ENCODE measurements at regions of chr17 and their contacts with region 1.

Region 1: GRCh38 chr17:33964344-33964979 is 290.6 kb upstream of the CCL2 start:
- DNase-seq: peak; percentile 81
- H3K4me3 Mint-ChIP-seq: peak overlapping the region; percentile 43
- H3K27ac Mint-ChIP-seq: no peak overlapping the region
- H3K4me1 Mint-ChIP-seq: peaks cover 45% of the 10 kb centered on the region
- H3K27me3 Mint-ChIP-seq: peaks cover 6% of the 10 kb centered on the region

Region 2: DNA sequence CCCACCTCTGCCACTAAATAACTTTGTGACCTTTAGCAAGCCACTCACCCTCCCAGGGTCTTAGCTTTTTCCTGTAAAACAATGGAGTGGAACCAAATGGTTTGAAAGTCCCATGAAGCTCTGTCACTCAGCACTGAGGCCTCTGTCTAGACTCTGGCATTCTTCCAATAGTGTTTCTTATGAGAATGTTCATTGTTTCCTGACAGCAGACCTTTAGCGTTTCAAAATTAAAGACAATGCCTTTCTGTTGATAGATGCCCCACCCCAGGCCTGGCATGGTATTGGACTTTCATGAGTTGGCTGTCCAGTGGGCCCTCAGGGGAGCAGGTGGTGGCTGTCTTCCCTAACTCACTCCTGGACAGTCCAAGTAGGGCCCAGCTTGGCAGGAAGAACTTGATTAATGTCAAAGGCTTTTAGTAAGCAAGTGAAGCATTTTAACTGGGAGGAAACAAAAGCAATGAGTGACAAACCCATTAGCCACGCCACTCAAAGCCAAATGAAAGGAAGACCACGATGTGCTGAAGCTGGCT is 104.1 kb after region 1 on chr17:
- intact Hi-C with region 1: no loop called
- DNase-seq: no peak
- H3K4me3 Mint-ChIP-seq: no peak overlapping the region
- H3K27ac Mint-ChIP-seq: no peak overlapping the region
- H3K4me1 Mint-ChIP-seq: no peaks in the 10 kb centered on the region
- H3K27me3 Mint-ChIP-seq: peaks cover under 1% of the 10 kb centered on the region

Region 3: DNA sequence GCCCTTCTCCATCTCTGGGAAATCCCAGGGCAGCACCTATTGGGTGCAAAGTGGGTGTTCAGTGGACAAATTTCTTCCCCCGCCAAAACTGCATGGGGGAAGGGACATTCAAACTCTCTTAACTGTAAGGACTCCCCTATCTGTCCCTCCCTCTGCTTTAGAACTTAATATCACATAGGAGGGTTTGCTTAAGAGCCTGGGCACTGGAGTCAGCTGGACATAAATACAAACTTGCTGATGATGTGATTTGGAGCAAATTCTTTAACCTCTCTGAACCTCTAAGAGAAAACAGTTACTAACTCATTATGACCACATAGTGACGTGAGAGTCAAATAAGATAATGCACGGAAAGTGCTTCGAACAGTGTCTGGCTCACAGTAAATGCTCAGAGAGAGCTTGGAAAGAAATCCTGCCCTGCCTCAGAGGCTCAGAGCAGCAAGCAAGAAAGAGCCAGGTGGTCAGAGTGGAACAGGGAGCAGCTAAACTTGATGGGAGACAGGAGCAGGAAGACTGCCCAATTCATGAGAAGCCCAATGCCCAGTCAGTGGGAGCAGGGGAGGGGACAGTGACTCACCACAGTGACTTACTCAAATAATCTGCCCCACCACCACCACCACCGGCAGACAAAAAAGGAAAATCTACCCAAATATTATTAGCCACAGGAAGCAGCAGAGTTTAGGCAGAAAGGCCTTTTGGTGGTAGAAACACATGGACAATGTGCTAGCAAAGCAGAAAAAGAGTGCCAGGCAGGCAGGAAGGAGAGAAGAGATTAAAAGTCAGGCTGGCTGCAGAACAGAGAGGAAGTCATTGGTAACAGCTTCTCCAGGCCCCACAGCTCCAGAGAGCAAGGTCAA is 422.5 kb after region 1 on chr17:
- intact Hi-C with region 1: loop called (anchors 10 kb)
- DNase-seq: no peak
- H3K4me3 Mint-ChIP-seq: peak overlapping the region; percentile 17
- H3K27ac Mint-ChIP-seq: peak overlapping the region; percentile 84
- H3K4me1 Mint-ChIP-seq: peaks cover 72% of the 10 kb centered on the region
- H3K27me3 Mint-ChIP-seq: peaks cover 14% of the 10 kb centered on the region